Activated CD4-positive, alpha-beta memory T cell treated with anti-CD3 and anti-CD28 coated beads for 36 hours (primary cell): ENCODE measurements at regions of chr7 and their contacts with region 1.

Region 1: DNA sequence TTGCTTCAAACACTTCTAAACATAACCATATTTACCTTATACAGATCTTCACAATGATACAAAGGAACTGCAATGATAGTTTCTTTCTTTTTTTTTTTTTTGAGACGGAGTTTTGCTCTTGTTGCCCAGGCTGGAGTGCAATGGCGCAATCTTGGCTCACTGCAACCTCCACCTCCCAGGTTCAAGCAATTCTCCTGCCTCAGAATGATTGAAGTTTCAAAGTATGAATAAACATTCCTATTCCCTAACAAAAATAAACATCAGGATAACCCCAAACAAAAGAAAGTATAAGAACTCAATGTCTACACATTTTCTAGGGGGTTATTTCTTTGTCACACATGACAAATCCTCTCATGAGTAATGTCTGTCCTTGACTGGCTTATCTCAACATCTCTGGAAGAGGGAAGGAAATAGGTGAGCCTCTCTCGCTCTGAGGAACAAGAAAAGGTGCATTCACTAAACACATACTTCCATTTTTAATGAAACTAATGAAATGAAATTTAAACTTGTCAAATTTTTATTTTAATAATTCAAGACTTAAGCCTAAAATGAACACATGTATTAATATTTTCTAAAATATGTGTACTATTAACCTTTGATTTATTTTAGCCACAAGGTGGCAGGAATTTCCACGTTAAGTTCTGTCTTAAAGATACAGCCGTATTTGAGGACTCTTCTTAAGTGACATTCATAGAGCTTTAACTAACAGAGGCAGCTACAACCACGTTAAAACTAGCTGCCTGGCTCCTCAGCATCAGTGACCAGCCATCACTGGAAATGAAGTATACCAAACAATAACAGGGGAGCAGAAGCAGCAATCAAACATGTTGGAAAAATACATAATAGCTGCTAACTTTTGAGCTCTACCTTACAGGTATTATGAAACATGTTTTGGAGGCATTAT is 58.3 kb downstream of the MALSU1 start:
- DNase-seq: no peak
- H3K4me3 Mint-ChIP-seq: no peak overlapping the region
- H3K27ac Mint-ChIP-seq: no peak overlapping the region
- H3K4me1 Mint-ChIP-seq: peaks cover 20% of the 10 kb centered on the region
- H3K27me3 Mint-ChIP-seq: peaks cover 17% of the 10 kb centered on the region

Region 2: DNA sequence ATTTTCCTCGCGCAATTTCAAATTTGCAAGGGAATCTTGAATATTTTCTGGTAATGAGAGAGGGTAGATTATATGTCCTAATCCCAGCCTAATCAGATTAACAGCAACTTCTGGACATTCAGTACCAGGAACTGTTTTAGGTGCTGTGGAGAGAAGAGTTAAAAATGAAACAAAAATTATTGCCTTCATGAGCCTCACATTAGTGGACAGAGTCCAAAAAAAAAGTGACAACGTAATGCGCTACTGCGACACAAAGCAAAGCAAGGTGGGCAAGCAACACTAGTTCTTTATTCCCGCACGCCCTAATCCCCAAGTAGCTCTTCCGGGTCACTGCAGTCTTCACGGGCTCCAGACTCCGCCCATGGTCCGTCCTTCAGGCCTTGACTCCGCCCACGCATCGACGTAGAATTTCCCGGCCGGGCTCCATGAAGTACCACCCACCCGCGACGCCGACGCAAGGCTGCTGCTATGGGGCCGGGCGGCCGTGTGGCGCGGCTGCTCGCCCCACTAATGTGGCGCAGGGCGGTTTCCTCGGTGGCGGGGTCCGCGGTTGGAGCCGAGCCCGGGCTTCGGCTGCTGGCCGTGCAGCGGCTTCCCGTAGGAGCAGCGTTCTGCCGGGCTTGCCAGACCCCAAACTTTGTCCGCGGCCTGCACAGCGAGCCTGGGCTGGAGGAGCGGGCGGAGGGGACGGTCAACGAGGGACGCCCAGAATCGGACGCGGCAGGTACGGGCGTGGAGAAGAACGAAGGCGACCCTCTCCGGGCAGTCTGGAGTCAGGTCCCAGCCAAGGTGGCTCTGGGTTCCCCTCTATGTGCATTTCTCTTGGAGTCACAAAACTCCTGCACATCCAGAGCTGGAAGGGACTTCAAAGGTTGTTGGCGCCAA is 58.3 kb before region 1 on chr7 and contains the start of gene MALSU1:
- CTCF ChIA-PET with region 1: no interaction called
- POLR2A ChIA-PET with region 1: interaction called, 4 read pairs
- intact Hi-C with region 1: loop called (anchors 2 kb)
- DNase-seq: peak; percentile 98
- H3K4me3 Mint-ChIP-seq: peak within 1 kb of the TSS; percentile 96
- H3K27ac Mint-ChIP-seq: peak within 1 kb of the TSS; percentile 97
- H3K4me1 Mint-ChIP-seq: peaks cover 36% of the 10 kb centered on the region
- H3K27me3 Mint-ChIP-seq: peaks cover 3% of the 10 kb centered on the region
- total RNA-seq, gene MALSU1: 100 to 101 TPM

Region 3: GRCh38 chr7:23373151-23374004 is 15.9 kb after region 1 on chr7:
- CTCF ChIA-PET with region 1: interaction called, 27 read pairs
- POLR2A ChIA-PET with region 1: interaction called, 9 read pairs
- intact Hi-C with region 1: loop called (anchors 1 kb)
- DNase-seq: peak; percentile 80
- H3K4me3 Mint-ChIP-seq: peak overlapping the region; percentile 17
- H3K27ac Mint-ChIP-seq: peak overlapping the region; percentile 76
- H3K4me1 Mint-ChIP-seq: peaks cover 46% of the 10 kb centered on the region
- H3K27me3 Mint-ChIP-seq: peaks cover 15% of the 10 kb centered on the region

Region 4: GRCh38 chr7:23404546-23405239 is 47.3 kb after region 1 on chr7:
- CTCF ChIA-PET with region 1: interaction called, 4 read pairs
- POLR2A ChIA-PET with region 1: no interaction called
- intact Hi-C with region 1: loop called (anchors 1 kb)
- DNase-seq: peak; percentile 51
- H3K4me3 Mint-ChIP-seq: peak overlapping the region; percentile 0
- H3K27ac Mint-ChIP-seq: peak overlapping the region; percentile 90
- H3K4me1 Mint-ChIP-seq: peaks cover 31% of the 10 kb centered on the region
- H3K27me3 Mint-ChIP-seq: peaks cover 5% of the 10 kb centered on the region

Region 5: GRCh38 chr7:23418046-23418445 is 60.6 kb after region 1 on chr7:
- CTCF ChIA-PET with region 1: no interaction called
- POLR2A ChIA-PET with region 1: no interaction called
- intact Hi-C with region 1: no loop called
- DNase-seq: no peak
- H3K4me3 Mint-ChIP-seq: no peak overlapping the region
- H3K27ac Mint-ChIP-seq: no peak overlapping the region
- H3K4me1 Mint-ChIP-seq: peaks cover 5% of the 10 kb centered on the region
- H3K27me3 Mint-ChIP-seq: peaks cover 11% of the 10 kb centered on the region

Region 6: DNA sequence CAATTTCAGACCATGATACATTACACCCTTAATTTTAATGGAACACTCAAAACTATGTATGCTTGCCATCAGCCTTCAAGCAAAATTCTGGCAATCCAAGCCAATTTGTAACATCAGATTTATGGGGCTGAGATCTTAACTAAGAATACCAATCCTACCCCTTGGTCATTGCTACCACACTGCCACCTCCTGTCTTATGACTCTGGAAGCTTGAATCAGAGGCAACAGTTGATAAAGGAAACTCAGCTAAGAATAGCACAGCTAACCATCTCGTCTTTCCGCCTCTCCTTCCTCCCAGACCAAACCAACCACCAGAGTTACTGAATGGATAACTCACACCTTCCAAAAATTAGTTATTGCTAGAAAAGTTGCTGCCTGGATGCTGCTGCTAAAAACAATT is 105.4 kb after region 1 on chr7:
- CTCF ChIA-PET with region 1: interaction called, 44 read pairs
- POLR2A ChIA-PET with region 1: interaction called, 5 read pairs
- intact Hi-C with region 1: loop called (anchors 1 kb)
- DNase-seq: peak; percentile 32
- H3K4me3 Mint-ChIP-seq: no peak overlapping the region
- H3K27ac Mint-ChIP-seq: no peak overlapping the region
- H3K4me1 Mint-ChIP-seq: peaks cover 8% of the 10 kb centered on the region
- H3K27me3 Mint-ChIP-seq: peaks cover 56% of the 10 kb centered on the region

Region 7: GRCh38 chr7:23531794-23532489 is 174.5 kb after region 1 on chr7 and contains the start of gene TRA2A:
- CTCF ChIA-PET with region 1: interaction called, 9 read pairs
- POLR2A ChIA-PET with region 1: interaction called, 3 read pairs
- intact Hi-C with region 1: loop called (anchors 5 kb)
- DNase-seq: peak; percentile 98
- H3K4me3 Mint-ChIP-seq: peak within 1 kb of the TSS; percentile 100
- H3K27ac Mint-ChIP-seq: peak within 1 kb of the TSS; percentile 100
- H3K4me1 Mint-ChIP-seq: peaks cover 38% of the 10 kb centered on the region
- H3K27me3 Mint-ChIP-seq: no peaks in the 10 kb centered on the region
- total RNA-seq, gene TRA2A: 75.4 to 77.8 TPM